ENCODE measurements at regions of chr6 and their contacts with region 1.

Region 1: DNA sequence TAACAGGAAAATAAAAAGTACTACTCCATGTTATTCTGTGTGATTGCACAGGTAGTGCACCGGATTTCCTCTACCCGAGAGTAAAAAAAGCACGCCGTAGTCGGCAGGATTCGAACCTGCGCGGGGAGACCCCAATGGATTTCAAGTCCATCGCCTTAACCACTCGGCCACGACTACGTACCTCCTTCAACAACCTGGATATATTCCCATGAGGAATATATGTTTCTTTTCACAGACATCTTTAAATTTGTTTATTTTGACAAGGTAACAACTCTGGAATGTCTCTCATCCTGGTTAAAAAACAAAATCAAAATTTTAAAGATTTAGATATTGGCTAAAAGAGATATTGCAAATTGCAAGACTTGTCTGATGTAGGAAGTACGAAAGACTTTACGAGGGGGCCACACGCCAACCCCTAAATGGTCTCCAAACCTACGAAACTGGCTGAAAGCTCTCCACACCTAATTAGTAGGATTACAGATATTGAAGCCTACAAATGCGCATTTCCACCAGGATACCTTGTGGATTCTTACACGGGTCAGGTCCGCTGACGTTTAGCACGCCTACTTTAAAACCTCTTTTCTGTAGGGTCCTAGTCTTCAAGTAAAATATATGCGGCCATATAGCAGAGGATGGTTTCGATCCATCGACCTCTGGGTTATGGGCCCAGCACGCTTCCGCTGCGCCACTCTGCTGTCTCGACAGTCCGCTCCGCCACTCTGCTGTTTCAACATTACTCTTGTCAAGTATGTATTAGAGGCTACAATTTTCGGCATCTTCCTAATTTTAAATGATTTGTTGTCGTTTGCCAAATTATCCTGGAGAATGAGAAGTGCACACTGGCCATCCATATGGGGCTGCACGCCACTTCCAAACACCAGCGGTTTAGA is 52.3 kb upstream of the BTN3A2 start:
- DNase-seq: peak; percentile 89
- H3K4me3 ChIP-seq: peak overlapping the region; percentile 10 to 51 (median 44)
- H3K27ac ChIP-seq: peak overlapping the region; percentile 47 to 60 (median 56)
- H3K4me1 ChIP-seq: peaks cover 0 to 11% (median 5%) of the 10 kb centered on the region in 4 donors
- H3K27me3 ChIP-seq: peaks cover 0 to 5% (median 0%) of the 10 kb centered on the region in 3 donors
- CTCF ChIP-seq: no peak
- EP300 ChIP-seq: no peak
- POLR2A ChIP-seq: no peak

Region 2: DNA sequence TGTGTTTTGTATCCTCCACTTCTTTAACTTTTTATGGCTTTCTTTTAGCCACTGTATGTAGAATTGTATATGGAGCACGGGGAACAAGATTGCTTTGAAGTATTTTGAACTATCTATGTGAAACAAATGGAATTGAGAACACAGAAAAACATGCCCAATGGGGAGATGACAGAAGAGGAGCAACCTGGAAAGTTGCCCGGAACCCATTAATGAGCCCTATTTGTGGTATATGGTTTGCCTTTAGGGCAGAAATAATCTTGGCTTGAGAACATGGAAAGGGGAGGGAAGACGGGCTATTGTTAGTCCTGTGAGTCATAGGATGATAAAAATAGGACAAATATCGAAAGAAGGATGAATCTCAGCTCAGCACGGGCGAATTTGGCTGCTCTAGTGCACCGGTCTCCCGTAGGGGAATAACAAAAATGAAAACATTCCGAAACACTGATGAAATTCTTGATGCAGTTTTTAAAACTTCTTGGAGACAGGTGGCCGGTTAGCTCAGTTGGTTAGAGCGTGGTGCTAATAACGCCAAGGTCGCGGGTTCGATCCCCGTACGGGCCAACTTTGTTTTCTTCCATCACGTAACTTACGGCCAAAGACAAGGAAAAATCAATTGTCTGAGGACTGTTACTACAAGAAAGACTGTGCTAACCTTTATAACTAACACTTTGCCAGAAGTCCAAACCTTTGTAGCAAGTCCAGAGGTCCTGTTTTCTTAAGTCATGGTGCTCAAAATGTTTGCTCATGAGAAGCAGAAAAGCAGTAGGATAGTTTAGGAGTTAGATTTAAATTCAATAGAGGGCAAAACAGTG is 241.1 kb after region 1 on chr6:
- intact Hi-C with region 1: loop called (anchors 5 kb)
- DNase-seq: peak; percentile 91
- H3K4me3 ChIP-seq: peak overlapping the region; percentile 36 to 51 (median 48)
- H3K27ac ChIP-seq: peak overlapping the region; percentile 69 to 89 (median 79)
- H3K4me1 ChIP-seq: peaks cover 4 to 24% (median 9%) of the 10 kb centered on the region in 4 donors
- H3K27me3 ChIP-seq: no peaks in the 10 kb centered on the region
- CTCF ChIP-seq: no peak
- EP300 ChIP-seq: no peak
- POLR2A ChIP-seq: no peak

Measured in sigmoid colon (tissue), 7 donors.